ENCODE measurements at regions of chr2 and their contacts with region 1.

Region 1: DNA sequence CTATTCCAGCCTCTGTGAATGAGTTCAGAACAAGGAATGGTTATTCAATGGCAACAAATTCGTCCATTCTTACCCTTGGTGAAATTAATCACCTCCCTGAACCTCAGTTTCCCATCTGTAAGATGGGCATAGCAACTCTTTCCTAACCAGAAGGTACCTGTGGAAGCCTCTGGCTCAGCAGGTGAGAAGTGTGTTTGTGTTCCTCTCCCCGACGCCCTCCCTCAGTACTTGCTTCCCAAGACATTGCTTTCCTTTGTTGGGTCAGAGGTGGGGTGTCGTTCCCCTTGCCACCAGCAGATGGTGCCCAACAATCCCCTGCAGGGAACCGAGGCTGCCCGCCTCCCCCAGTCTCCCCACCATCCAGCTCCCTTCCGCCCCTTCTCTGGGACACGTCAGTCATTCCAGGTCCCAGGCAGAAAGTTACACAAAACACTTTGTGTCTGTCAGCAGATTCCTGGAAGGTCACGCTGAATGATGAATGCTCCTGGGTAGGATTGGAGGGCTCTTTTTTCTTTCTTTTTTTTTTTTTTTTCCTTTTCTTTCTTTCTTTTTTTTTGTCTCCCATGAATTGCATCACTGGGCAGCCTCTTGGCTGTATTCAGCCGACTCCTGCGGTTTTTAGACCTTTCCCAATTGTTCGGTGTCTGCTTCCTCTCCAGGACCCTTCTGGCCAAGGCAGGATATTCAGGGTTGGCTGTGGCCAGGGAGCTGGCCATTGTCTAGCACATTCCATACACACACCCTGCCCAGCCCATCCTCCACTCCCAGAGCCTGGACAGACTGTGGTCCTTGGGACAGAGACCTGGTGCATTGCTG is 117.3 kb downstream of the LPIN1 start:
- DNase-seq: peak; percentile 80
- ATAC-seq: peak; percentile 73
- H3K4me3 ChIP-seq: peak overlapping the region in 3 of 5 experiments; percentile 5 to 29 (median 26)
- H3K4me3 Mint-ChIP-seq: peak overlapping the region; percentile 73
- H3K27ac ChIP-seq: no peak overlapping the region
- H3K27ac Mint-ChIP-seq: peak overlapping the region; percentile 59
- H3K4me1 ChIP-seq: peaks cover 70 to 81% of the 10 kb centered on the region in 2 donors
- H3K4me1 Mint-ChIP-seq: peaks cover 87% of the 10 kb centered on the region
- H3K27me3 ChIP-seq: no peaks in the 10 kb centered on the region
- H3K27me3 Mint-ChIP-seq: no peaks in the 10 kb centered on the region
- CTCF ChIP-seq: peak; percentile 96

Region 2: GRCh38 chr2:11829947-11830707 is 33.6 kb before region 1 on chr2:
- CTCF ChIA-PET with region 1: interaction called, 5 read pairs
- POLR2A ChIA-PET with region 1: no interaction called
- intact Hi-C with region 1: loop called (anchors 1 kb)
- DNase-seq: peak; percentile 58
- ATAC-seq: peak; percentile 59
- H3K4me3 ChIP-seq: peak overlapping the region in 4 of 5 experiments; percentile 3 to 34 (median 20)
- H3K4me3 Mint-ChIP-seq: peak overlapping the region; percentile 83
- H3K27ac ChIP-seq: peak overlapping the region; percentile 40 to 64
- H3K27ac Mint-ChIP-seq: peak overlapping the region; percentile 78
- H3K4me1 ChIP-seq: peaks cover 42 to 63% of the 10 kb centered on the region in 2 donors
- H3K4me1 Mint-ChIP-seq: peaks cover 61% of the 10 kb centered on the region
- H3K27me3 ChIP-seq: no peaks in the 10 kb centered on the region
- H3K27me3 Mint-ChIP-seq: no peaks in the 10 kb centered on the region
- CTCF ChIP-seq: no peak

Region 3: GRCh38 chr2:12032398-12032797 is 168.7 kb after region 1 on chr2:
- CTCF ChIA-PET with region 1: interaction called, 10 read pairs
- POLR2A ChIA-PET with region 1: interaction called, 6 read pairs
- intact Hi-C with region 1: loop called (anchors 1 kb)
- DNase-seq: peak; percentile 86
- ATAC-seq: peak; percentile 77
- H3K4me3 ChIP-seq: peak overlapping the region in 2 of 5 experiments; percentile 7 to 39
- H3K4me3 Mint-ChIP-seq: peak overlapping the region; percentile 83
- H3K27ac ChIP-seq: peak overlapping the region; percentile 66 to 81
- H3K27ac Mint-ChIP-seq: peak overlapping the region; percentile 92
- H3K4me1 ChIP-seq: peaks cover 61 to 64% of the 10 kb centered on the region in 2 donors
- H3K4me1 Mint-ChIP-seq: peaks cover 66% of the 10 kb centered on the region
- H3K27me3 ChIP-seq: no peaks in the 10 kb centered on the region
- H3K27me3 Mint-ChIP-seq: no peaks in the 10 kb centered on the region
- CTCF ChIP-seq: peak; percentile 39

Region 4: DNA sequence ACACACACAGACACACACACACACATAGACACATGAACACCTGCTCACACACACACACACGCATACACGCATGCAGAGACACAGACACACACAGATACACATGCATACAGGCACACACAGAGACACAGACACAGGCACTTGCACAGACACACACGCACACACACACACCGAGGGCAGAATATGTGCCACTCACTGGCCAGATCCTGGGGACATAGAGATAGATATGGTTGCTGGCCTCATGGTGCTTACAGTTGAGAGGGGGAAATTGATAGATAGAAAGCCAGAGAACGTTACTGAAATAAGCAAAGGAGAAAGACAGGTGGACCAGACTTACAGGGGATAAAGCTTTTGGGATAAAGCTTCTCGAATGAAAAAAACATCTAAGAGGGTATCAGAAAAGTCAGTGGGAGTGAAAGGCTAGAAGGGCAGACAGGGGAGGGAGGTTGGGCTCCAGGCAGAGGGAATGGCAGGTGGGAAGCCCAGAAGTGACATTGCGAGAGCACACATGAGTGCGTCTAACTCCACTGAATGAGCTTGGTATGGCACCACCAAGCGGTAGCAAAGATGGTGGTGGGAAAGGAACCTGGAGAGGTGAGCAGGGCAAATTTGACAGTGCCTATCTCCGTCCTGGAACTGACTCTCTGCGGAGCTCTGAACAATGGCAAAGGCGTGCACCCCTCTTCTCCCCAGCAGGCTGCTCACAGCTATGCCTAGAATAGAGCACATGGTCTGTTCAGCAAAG is 462.9 kb after region 1 on chr2:
- CTCF ChIA-PET with region 1: interaction called, 14 read pairs
- POLR2A ChIA-PET with region 1: no interaction called
- intact Hi-C with region 1: loop called (anchors 2 kb)
- DNase-seq: peak; percentile 53
- ATAC-seq: peak; percentile 33
- H3K4me3 ChIP-seq: no peak overlapping the region
- H3K4me3 Mint-ChIP-seq: peak overlapping the region; percentile 12
- H3K27ac ChIP-seq: no peak overlapping the region
- H3K27ac Mint-ChIP-seq: peak overlapping the region; percentile 17
- H3K4me1 ChIP-seq: peaks cover 14 to 20% of the 10 kb centered on the region in 2 donors
- H3K4me1 Mint-ChIP-seq: peaks cover 24% of the 10 kb centered on the region
- H3K27me3 ChIP-seq: no peaks in the 10 kb centered on the region
- H3K27me3 Mint-ChIP-seq: no peaks in the 10 kb centered on the region
- CTCF ChIP-seq: peak; percentile 29

Region 5: GRCh38 chr2:12560618-12561017 is 696.9 kb after region 1 on chr2:
- CTCF ChIA-PET with region 1: no interaction called
- POLR2A ChIA-PET with region 1: no interaction called
- intact Hi-C with region 1: loop called (anchors 10 kb)
- DNase-seq: peak; percentile 23
- ATAC-seq: peak; percentile 49
- H3K4me3 ChIP-seq: no peak overlapping the region
- H3K4me3 Mint-ChIP-seq: peak overlapping the region; percentile 4
- H3K27ac ChIP-seq: no peak overlapping the region
- H3K27ac Mint-ChIP-seq: no peak overlapping the region
- H3K4me1 ChIP-seq: peaks cover 6 to 8% of the 10 kb centered on the region in 2 donors
- H3K4me1 Mint-ChIP-seq: peaks cover 25% of the 10 kb centered on the region
- H3K27me3 ChIP-seq: peaks cover 0 to 8% (median 3%) of the 10 kb centered on the region in 4 experiments
- H3K27me3 Mint-ChIP-seq: peaks cover 11% of the 10 kb centered on the region
- CTCF ChIP-seq: no peak

Measured in B cell (primary cell).